Activated CD4-positive, alpha-beta T cell treated with anti-CD3 and anti-CD28 coated beads, Interleukin-2, amount 10 ng/mL, durations not matched to agents 7 days and 5 days (primary cell): ENCODE measurements at regions of chr17 and their contacts with region 1.

Region 1: GRCh38 chr17:77869665-77870132 is 88.8 kb upstream of the TNRC6C start:
- DNase-seq: no peak
- H3K4me3 Mint-ChIP-seq: no peak overlapping the region
- H3K27ac Mint-ChIP-seq: no peak overlapping the region
- H3K4me1 Mint-ChIP-seq: peaks cover 49% of the 10 kb centered on the region
- H3K27me3 Mint-ChIP-seq: no peaks in the 10 kb centered on the region

Region 2: GRCh38 chr17:77834170-77835115 is 35.3 kb before region 1 on chr17:
- CTCF ChIA-PET with region 1: no interaction called
- POLR2A ChIA-PET with region 1: no interaction called
- DNase-seq: peak; percentile 52
- H3K4me3 Mint-ChIP-seq: no peak overlapping the region
- H3K27ac Mint-ChIP-seq: no peak overlapping the region
- H3K4me1 Mint-ChIP-seq: peaks cover 29% of the 10 kb centered on the region
- H3K27me3 Mint-ChIP-seq: peaks cover 3% of the 10 kb centered on the region

Region 3: DNA sequence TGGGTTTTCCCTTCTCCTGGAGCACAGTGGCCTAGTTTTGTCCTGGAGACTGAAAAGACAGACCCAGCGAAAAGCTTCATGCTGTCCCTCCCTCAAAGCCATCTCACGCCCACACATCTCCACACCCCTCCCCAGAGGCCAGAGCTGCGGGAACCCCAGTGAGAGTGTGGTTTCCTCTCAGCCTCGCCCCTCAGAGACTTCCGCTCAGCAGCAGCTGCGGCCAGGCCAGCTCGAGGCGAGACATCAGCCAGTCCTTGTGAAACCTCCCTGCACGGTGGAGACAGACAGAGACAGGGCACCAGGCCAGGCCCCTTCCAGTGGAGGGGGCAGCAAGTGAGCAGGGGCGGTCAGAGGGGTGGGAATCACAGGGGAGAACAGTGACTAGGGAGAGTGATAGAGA is 11.8 kb after region 1 on chr17:
- CTCF ChIA-PET with region 1: interaction called, 16 read pairs
- POLR2A ChIA-PET with region 1: no interaction called
- DNase-seq: peak; percentile 86
- H3K4me3 Mint-ChIP-seq: peak overlapping the region; percentile 81
- H3K27ac Mint-ChIP-seq: peak overlapping the region; percentile 98
- H3K4me1 Mint-ChIP-seq: peaks cover 67% of the 10 kb centered on the region
- H3K27me3 Mint-ChIP-seq: peaks cover 15% of the 10 kb centered on the region